PC-9 (cell line): ENCODE measurements at regions of chr19 and their contacts with region 1.

Region 1: GRCh38 chr19:8242211-8242821 is 33.1 kb downstream of the CERS4 start:
- DNase-seq: no peak
- H3K4me3 ChIP-seq: no peak overlapping the region
- H3K27ac ChIP-seq: no peak overlapping the region
- H3K4me1 ChIP-seq: peaks cover 13% of the 10 kb centered on the region
- H3K27me3 ChIP-seq: no peaks in the 10 kb centered on the region
- CTCF ChIP-seq: no peak

Region 2: GRCh38 chr19:8141726-8142512 is 100.4 kb before region 1 on chr19:
- CTCF ChIA-PET with region 1: interaction called, 11 read pairs
- POLR2A ChIA-PET with region 1: no interaction called
- intact Hi-C with region 1: no loop called
- DNase-seq: no peak
- H3K4me3 ChIP-seq: no peak overlapping the region
- H3K27ac ChIP-seq: no peak overlapping the region
- H3K4me1 ChIP-seq: peaks cover 8% of the 10 kb centered on the region; the same call in 1 of the 2 replicates
- H3K27me3 ChIP-seq: peaks cover 23% of the 10 kb centered on the region
- CTCF ChIP-seq: no peak